ENCODE measurements at regions of chr5 and their contacts with region 1.

Region 1: DNA sequence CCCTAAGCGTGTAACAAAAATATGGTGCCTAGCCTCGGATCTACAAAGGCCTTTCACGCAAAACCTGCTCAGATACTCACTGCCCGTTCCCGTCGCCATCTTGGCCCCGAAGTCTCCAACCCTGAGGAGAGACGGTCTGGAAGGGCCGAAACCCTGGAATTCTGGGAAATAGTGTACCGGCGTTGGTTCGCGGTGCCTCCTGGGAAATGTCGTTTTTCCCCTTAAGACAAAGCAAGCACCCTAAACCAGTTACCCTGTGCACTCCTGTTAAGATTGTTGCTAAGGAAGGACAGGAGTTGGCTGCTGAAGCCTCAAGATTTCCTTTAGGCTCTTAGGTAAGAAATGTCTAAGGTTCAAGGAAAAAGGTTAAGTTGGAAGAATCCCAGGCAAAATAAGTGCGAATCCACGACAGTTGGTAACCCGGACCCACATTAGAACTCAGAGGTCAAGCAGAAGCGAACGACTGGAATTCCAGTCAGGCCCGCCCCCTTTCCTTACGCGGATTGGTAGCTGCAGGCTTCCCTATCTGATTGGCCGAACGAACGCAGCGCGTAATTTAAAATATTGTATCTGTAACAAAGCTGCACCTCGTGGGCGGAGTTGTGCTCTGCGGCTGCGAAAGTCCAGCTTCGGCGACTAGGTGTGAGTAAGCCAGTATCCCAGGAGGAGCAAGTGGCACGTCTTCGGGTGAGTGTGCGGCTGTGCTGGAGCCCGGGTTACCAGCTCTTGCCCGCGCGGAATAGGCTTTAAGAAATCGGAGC is at the starts of genes BRD8 and KIF20A:
- DNase-seq: peak; percentile 96
- ATAC-seq: peak; percentile 93
- H3K4me3 Mint-ChIP-seq: no peak within 1 kb of the TSS
- H3K27ac Mint-ChIP-seq: peak within 1 kb of the TSS; percentile 73
- H3K4me1 Mint-ChIP-seq: peaks cover 16% of the 10 kb centered on the region
- H3K27me3 Mint-ChIP-seq: no peaks in the 10 kb centered on the region
- total RNA-seq, gene BRD8: 60.7 to 61.4 TPM
- total RNA-seq, gene KIF20A: 66.6 to 76.3 TPM

Region 2: GRCh38 chr5:138331449-138332368 is 153.0 kb after region 1 on chr5 and contains the start of gene CDC25C:
- CTCF ChIA-PET with region 1: no interaction called
- POLR2A ChIA-PET with region 1: interaction called, 3 read pairs
- intact Hi-C with region 1: loop called (anchors 1 kb)
- DNase-seq: peak; percentile 98
- ATAC-seq: peak; percentile 100
- H3K4me3 Mint-ChIP-seq: peak within 1 kb of the TSS; percentile 86
- H3K27ac Mint-ChIP-seq: peak within 1 kb of the TSS; percentile 87
- H3K4me1 Mint-ChIP-seq: peaks cover 22% of the 10 kb centered on the region
- H3K27me3 Mint-ChIP-seq: no peaks in the 10 kb centered on the region
- total RNA-seq, gene CDC25C: 15.9 to 19.0 TPM

Region 3: GRCh38 chr5:138337685-138338410 is 159.2 kb after region 1 on chr5 and contains the start of gene FAM53C:
- CTCF ChIA-PET with region 1: interaction called, 3 read pairs
- POLR2A ChIA-PET with region 1: interaction called, 10 read pairs
- intact Hi-C with region 1: loop called (anchors 1 to 2 kb)
- DNase-seq: peak; percentile 95
- ATAC-seq: peak; percentile 88
- H3K4me3 Mint-ChIP-seq: peak within 1 kb of the TSS; percentile 84
- H3K27ac Mint-ChIP-seq: peak within 1 kb of the TSS; percentile 97
- H3K4me1 Mint-ChIP-seq: peaks cover 38% of the 10 kb centered on the region
- H3K27me3 Mint-ChIP-seq: no peaks in the 10 kb centered on the region
- total RNA-seq, gene FAM53C: 22.8 to 25.9 TPM

Region 4: GRCh38 chr5:138408023-138408422 is 229.3 kb after region 1 on chr5:
- CTCF ChIA-PET with region 1: no interaction called
- POLR2A ChIA-PET with region 1: no interaction called
- intact Hi-C with region 1: loop called in 1 of 2 experiments (anchors 1 kb)
- DNase-seq: peak; percentile 68
- ATAC-seq: peak; percentile 94
- H3K4me3 Mint-ChIP-seq: no peak overlapping the region
- H3K27ac Mint-ChIP-seq: peak overlapping the region; percentile 60
- H3K4me1 Mint-ChIP-seq: peaks cover 13% of the 10 kb centered on the region
- H3K27me3 Mint-ChIP-seq: no peaks in the 10 kb centered on the region

Region 5: GRCh38 chr5:138491669-138492559 is 313.2 kb after region 1 on chr5:
- CTCF ChIA-PET with region 1: no interaction called
- POLR2A ChIA-PET with region 1: no interaction called
- intact Hi-C with region 1: loop called in 1 of 2 experiments (anchors 1 kb)
- DNase-seq: peak; percentile 92
- ATAC-seq: peak; percentile 99
- H3K4me3 Mint-ChIP-seq: peak overlapping the region; percentile 84
- H3K27ac Mint-ChIP-seq: peak overlapping the region; percentile 79
- H3K4me1 Mint-ChIP-seq: peaks cover 15% of the 10 kb centered on the region
- H3K27me3 Mint-ChIP-seq: peaks cover 23% of the 10 kb centered on the region

Measured in activated CD4-positive, alpha-beta T cell treated with anti-CD3 and anti-CD28 coated beads for 36 hours (primary cell).